ENCODE measurements at regions of chr11 and their contacts with region 1.

Region 1: GRCh38 chr11:7688238-7688826 is 15.0 kb upstream of the CYB5R2 start:
- DNase-seq: no peak
- ATAC-seq: peak; percentile 58
- H3K4me3 Mint-ChIP-seq: no peak overlapping the region
- H3K27ac Mint-ChIP-seq: no peak overlapping the region
- H3K4me1 Mint-ChIP-seq: no peaks in the 10 kb centered on the region
- H3K27me3 Mint-ChIP-seq: peaks cover 12% of the 10 kb centered on the region
- CTCF ChIP-seq: peak; percentile 59

Region 2: GRCh38 chr11:6812390-6813005 is 875.8 kb before region 1 on chr11:
- CTCF ChIA-PET with region 1: interaction called, 10 read pairs
- POLR2A ChIA-PET with region 1: no interaction called
- intact Hi-C with region 1: no loop called
- DNase-seq: no peak
- ATAC-seq: peak; percentile 85
- H3K4me3 Mint-ChIP-seq: no peak overlapping the region
- H3K27ac Mint-ChIP-seq: no peak overlapping the region
- H3K4me1 Mint-ChIP-seq: peaks cover 4% of the 10 kb centered on the region
- H3K27me3 Mint-ChIP-seq: peaks cover 9% of the 10 kb centered on the region
- CTCF ChIP-seq: peak; percentile 95

Region 3: DNA sequence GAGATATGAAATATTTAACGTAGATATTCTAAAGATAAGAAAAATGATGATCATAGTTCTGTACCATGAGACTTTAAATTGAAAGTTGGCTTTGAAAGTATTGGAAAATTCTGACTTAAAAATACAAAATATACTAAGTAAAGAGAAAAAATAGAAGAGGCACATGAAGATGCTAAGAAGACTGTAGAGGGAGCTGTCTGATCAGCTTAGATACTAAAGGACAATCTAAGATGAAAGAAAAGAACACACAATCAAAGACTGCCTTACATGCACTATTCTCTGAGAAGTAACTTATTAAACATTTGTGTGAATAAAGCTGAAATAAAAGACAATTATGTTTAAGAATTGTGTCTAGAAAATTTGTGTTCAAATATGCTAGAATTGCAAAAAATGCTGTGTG is 544.4 kb before region 1 on chr11:
- CTCF ChIA-PET with region 1: no interaction called
- POLR2A ChIA-PET with region 1: no interaction called
- intact Hi-C with region 1: loop called (anchors 1 kb)
- DNase-seq: no peak
- ATAC-seq: no peak
- H3K4me3 Mint-ChIP-seq: no peak overlapping the region
- H3K27ac Mint-ChIP-seq: no peak overlapping the region
- H3K4me1 Mint-ChIP-seq: no peaks in the 10 kb centered on the region
- H3K27me3 Mint-ChIP-seq: peaks cover 12% of the 10 kb centered on the region
- CTCF ChIP-seq: no peak

Region 4: DNA sequence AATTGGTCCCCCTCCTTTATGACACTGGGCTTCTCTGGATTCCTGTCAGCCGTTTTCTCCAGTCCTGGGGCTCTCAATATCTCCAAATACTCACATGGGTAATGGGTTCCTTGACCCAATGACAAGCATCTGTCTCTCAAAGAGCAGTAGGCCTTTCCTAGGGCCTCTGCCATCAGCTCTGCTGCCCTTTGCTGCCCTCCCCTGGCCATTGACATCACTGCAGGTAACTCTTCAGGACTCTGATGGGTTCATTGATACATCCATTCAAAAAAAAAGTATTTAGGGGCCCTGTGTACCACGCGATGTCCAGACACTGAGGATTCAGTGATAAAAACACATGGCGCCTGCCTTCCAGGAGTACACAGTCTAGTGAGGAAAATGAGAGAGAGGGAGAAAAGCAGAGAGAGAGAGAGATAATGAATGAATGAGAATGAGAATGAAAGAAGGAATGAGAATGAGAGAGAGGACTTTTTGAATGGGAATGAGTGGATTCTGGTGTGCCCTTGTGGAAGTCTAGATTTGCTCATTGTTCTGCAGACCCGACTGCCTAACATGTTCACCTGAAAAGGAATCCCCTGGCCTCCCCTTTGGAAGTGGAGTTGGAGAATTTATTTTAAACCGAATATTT is 245.6 kb before region 1 on chr11:
- CTCF ChIA-PET with region 1: interaction called, 3 read pairs
- POLR2A ChIA-PET with region 1: no interaction called
- intact Hi-C with region 1: loop called (anchors 2 kb)
- DNase-seq: peak; percentile 67
- ATAC-seq: peak; percentile 100
- H3K4me3 Mint-ChIP-seq: no peak overlapping the region
- H3K27ac Mint-ChIP-seq: no peak overlapping the region
- H3K4me1 Mint-ChIP-seq: no peaks in the 10 kb centered on the region
- H3K27me3 Mint-ChIP-seq: no peaks in the 10 kb centered on the region
- CTCF ChIP-seq: peak; percentile 42

Region 5: DNA sequence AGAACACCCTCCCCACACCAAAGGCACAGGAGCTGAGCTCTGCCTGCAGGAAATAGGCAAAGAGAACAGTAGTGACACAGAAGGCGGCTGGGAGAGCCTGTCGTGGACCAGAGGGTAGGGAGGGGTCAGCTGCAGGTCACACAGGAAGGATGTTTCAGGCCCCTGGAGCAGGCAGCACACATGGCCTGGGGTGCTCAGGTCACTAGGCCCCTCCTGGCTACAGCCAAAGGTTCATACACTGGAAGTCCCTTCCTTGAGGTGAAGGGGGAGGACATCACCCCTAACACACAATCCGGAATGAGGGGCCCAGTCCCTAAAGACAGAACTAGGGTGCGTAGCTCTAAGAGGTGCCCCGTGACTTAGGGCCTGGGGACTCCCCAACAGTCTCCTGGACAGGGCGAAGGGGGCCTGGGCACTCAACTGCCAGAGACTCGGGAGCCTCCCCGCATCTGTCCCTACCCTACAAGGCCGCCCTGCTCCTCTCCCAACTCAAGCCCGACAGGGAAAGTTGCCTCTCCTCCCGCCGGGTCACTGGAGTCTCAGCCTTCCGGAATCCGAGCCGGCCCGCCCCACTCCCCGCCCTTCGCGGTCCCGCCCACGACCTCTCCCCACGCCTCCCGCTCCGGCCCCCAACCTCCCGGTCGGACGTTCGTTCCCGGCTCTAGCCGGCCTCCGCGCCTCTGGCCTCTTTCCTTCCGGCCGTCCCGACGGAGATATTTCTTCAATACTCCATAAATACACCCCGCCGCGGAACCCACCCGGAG is 15.2 kb before region 1 on chr11 and contains the start of gene CYB5R2:
- CTCF ChIA-PET with region 1: interaction called, 10 read pairs
- POLR2A ChIA-PET with region 1: interaction called, 4 read pairs
- intact Hi-C with region 1: no loop called
- DNase-seq: peak; percentile 34
- ATAC-seq: peak; percentile 36
- H3K4me3 Mint-ChIP-seq: peak within 1 kb of the TSS; percentile 85
- H3K27ac Mint-ChIP-seq: peak within 1 kb of the TSS; percentile 86
- H3K4me1 Mint-ChIP-seq: peaks cover 52% of the 10 kb centered on the region
- H3K27me3 Mint-ChIP-seq: peaks cover 17% of the 10 kb centered on the region
- CTCF ChIP-seq: no peak
- total RNA-seq, gene CYB5R2: 22.3 and 25.9 TPM in 2 replicates